B cell (primary cell): ENCODE measurements at regions of chr1 and their contacts with region 1.

Region 1: DNA sequence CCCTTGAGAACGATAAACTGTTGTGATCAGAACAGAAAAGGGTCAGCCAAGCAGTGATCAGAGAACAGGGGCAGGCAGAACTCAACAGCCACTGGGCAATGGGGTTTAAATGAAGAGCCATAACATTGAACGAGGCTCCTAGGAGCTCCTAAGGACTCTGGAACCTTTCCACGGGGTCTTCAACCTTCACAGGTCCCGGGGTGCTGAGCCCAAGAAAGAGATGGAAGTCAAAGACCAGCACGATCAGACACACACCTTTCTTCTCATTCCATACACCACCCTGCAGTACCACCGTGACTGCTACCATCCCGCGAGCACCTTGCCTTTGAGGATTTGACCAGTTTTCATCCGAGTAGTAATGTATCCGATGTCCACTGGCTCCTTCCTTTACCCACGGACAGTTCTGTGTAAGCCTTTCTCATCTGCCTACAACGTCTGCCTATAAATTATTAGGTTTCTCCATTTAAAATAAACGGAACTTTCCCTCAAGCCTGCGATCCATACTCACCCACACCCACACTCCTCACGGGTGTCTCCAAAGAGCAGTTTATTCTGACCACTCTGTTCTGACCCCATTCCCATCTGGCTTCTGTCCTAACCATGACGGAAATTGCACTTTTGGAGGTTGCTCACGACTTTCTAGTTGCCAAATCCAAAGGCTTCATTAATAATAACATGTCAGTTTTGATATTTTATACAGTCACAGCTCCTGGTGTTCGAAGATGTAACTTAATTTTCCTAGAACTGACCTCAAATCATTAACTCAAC is 16.8 kb upstream of the HHAT start:
- DNase-seq: no peak
- ATAC-seq: no peak
- H3K4me3 ChIP-seq: peak overlapping the region in 3 of 5 experiments; percentile 42 to 66 (median 55)
- H3K4me3 Mint-ChIP-seq: peak overlapping the region; percentile 85
- H3K27ac ChIP-seq: no peak overlapping the region
- H3K27ac Mint-ChIP-seq: no peak overlapping the region
- H3K4me1 ChIP-seq: peaks cover 3 to 13% of the 10 kb centered on the region in 2 donors
- H3K4me1 Mint-ChIP-seq: peaks cover 6% of the 10 kb centered on the region
- H3K27me3 ChIP-seq: peaks cover 0 to 2% (median 0%) of the 10 kb centered on the region in 4 experiments
- H3K27me3 Mint-ChIP-seq: peaks cover 17% of the 10 kb centered on the region
- CTCF ChIP-seq: no peak

Region 2: GRCh38 chr1:209860293-209860881 is 451.5 kb before region 1 on chr1:
- CTCF ChIA-PET with region 1: interaction called, 14 read pairs
- POLR2A ChIA-PET with region 1: interaction called, 8 read pairs
- intact Hi-C with region 1: no loop called
- DNase-seq: peak; percentile 75
- ATAC-seq: peak; percentile 81
- H3K4me3 ChIP-seq: no peak overlapping the region
- H3K4me3 Mint-ChIP-seq: no peak overlapping the region
- H3K27ac ChIP-seq: no peak overlapping the region
- H3K27ac Mint-ChIP-seq: no peak overlapping the region
- H3K4me1 ChIP-seq: no peaks in the 10 kb centered on the region
- H3K4me1 Mint-ChIP-seq: no peaks in the 10 kb centered on the region
- H3K27me3 ChIP-seq: peaks cover 0 to 11% (median 3%) of the 10 kb centered on the region in 4 experiments
- H3K27me3 Mint-ChIP-seq: peaks cover 29% of the 10 kb centered on the region
- CTCF ChIP-seq: peak; percentile 97

Region 3: DNA sequence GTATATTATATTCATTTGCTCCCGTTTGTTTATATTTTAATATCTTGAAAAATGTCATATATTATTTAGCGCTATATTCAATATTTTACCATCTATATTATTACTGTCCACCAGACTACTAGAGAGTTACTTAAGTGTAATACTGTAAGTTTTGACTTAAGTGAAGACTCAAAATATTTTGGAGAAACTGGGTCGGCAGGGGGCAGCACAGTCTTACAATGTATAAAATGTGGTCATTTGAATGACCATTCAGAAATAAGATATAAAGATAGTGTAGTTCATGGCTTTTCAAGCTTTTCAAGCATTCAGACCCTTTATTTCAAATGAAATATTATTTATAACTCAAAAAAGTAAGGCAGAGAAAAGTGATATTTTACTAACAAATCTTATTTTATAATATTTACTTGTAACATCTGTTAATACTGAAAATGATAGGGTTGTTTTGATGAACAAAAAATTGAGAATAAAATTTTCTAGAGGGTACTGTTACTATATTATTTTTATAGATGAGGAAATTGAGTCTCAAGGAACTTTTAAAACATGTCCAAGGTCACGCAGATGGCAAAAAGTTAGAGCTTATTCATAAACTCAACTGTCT is 168.3 kb before region 1 on chr1:
- CTCF ChIA-PET with region 1: interaction called, 20 read pairs
- POLR2A ChIA-PET with region 1: no interaction called
- intact Hi-C with region 1: loop called (anchors 1 kb)
- DNase-seq: peak; percentile 36
- ATAC-seq: no peak
- H3K4me3 ChIP-seq: no peak overlapping the region
- H3K4me3 Mint-ChIP-seq: no peak overlapping the region
- H3K27ac ChIP-seq: no peak overlapping the region
- H3K27ac Mint-ChIP-seq: no peak overlapping the region
- H3K4me1 ChIP-seq: no peaks in the 10 kb centered on the region
- H3K4me1 Mint-ChIP-seq: no peaks in the 10 kb centered on the region
- H3K27me3 ChIP-seq: peaks cover 0 to 8% (median 5%) of the 10 kb centered on the region in 4 experiments
- H3K27me3 Mint-ChIP-seq: peaks cover 18% of the 10 kb centered on the region
- CTCF ChIP-seq: peak; percentile 69

Region 4: DNA sequence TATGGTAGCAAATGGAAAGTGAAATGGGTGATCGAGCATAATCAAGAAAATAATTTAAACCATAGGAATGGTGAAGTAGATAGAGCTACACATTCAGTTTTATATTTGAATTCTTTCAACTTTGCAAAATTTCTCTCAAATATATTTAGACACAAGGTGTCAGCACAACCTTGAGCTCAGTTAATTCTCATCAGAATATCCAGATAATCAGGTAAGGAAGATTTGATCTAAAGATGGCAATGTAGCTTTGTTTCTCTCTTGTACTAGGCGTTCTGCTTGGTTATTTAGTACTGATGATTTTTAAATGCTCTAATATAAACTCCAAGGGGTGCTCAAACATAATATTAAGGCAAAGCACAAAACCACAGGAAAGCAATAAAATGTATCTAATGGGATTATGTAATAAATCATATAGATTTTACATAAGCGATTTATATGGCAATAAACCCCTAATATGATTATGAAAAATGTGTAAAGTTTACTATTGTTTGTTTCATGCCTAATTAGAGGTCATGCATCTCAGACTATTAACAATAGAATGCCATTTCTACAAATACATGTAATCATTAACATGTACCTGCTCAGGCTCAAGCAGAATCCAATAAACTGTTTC is 111.7 kb before region 1 on chr1:
- CTCF ChIA-PET with region 1: no interaction called
- POLR2A ChIA-PET with region 1: no interaction called
- intact Hi-C with region 1: loop called (anchors 5 kb)
- DNase-seq: no peak
- ATAC-seq: no peak
- H3K4me3 ChIP-seq: no peak overlapping the region
- H3K4me3 Mint-ChIP-seq: no peak overlapping the region
- H3K27ac ChIP-seq: no peak overlapping the region
- H3K27ac Mint-ChIP-seq: no peak overlapping the region
- H3K4me1 ChIP-seq: no peaks in the 10 kb centered on the region
- H3K4me1 Mint-ChIP-seq: no peaks in the 10 kb centered on the region
- H3K27me3 ChIP-seq: no peaks in the 10 kb centered on the region
- H3K27me3 Mint-ChIP-seq: peaks cover 4% of the 10 kb centered on the region
- CTCF ChIP-seq: no peak

Region 5: GRCh38 chr1:210292231-210292871 is 19.6 kb before region 1 on chr1:
- CTCF ChIA-PET with region 1: no interaction called
- POLR2A ChIA-PET with region 1: no interaction called
- intact Hi-C with region 1: no loop called
- DNase-seq: peak; percentile 31
- ATAC-seq: peak; percentile 54
- H3K4me3 ChIP-seq: peak overlapping the region in 3 of 5 experiments; percentile 25 to 46 (median 39)
- H3K4me3 Mint-ChIP-seq: peak overlapping the region; percentile 69
- H3K27ac ChIP-seq: no peak overlapping the region
- H3K27ac Mint-ChIP-seq: no peak overlapping the region
- H3K4me1 ChIP-seq: peaks cover 12 to 14% of the 10 kb centered on the region in 2 donors
- H3K4me1 Mint-ChIP-seq: peaks cover 3% of the 10 kb centered on the region
- H3K27me3 ChIP-seq: peaks cover 0 to 42% (median 23%) of the 10 kb centered on the region in 4 experiments
- H3K27me3 Mint-ChIP-seq: peaks cover 58% of the 10 kb centered on the region
- CTCF ChIP-seq: no peak

Region 6: GRCh38 chr1:210328746-210329503 is 17.0 kb after region 1 on chr1 and contains the start of gene HHAT:
- CTCF ChIA-PET with region 1: interaction called, 7 read pairs
- POLR2A ChIA-PET with region 1: interaction called, 3 read pairs
- intact Hi-C with region 1: loop called (anchors 1 kb)
- DNase-seq: peak; percentile 75
- ATAC-seq: peak; percentile 70
- H3K4me3 ChIP-seq: peak within 1 kb of the TSS; percentile 52 to 89 (median 87)
- H3K4me3 Mint-ChIP-seq: peak within 1 kb of the TSS; percentile 94
- H3K27ac ChIP-seq: peak within 1 kb of the TSS; percentile 54 to 64
- H3K27ac Mint-ChIP-seq: peak within 1 kb of the TSS; percentile 90
- H3K4me1 ChIP-seq: peaks cover 16 to 25% of the 10 kb centered on the region in 2 donors
- H3K4me1 Mint-ChIP-seq: peaks cover 39% of the 10 kb centered on the region
- H3K27me3 ChIP-seq: peaks cover 0 to 2% (median 0%) of the 10 kb centered on the region in 4 experiments
- H3K27me3 Mint-ChIP-seq: peaks cover 12% of the 10 kb centered on the region
- CTCF ChIP-seq: no peak
- total RNA-seq, gene HHAT: 26.7 and 28.2 TPM in 2 replicates

Region 7: DNA sequence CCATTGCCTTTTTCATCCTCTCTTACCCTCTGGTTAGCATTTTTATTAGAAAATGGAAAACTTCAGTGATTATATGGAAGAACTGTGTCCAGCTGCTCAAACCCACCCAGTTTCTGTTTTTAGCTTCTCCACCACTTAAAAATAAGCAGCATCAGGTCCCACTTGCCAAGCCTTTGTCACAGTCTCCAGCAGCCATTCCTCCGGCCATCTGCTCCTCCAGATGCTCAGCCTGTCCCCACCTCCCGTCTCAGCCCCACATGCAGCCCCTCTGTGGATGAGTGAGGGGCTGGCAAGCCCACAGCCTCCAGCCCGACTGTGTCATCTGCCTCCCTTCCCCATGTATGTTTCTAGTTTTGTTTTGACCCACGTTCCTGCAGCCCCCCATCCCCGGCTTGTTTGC is 306.5 kb after region 1 on chr1:
- CTCF ChIA-PET with region 1: no interaction called
- POLR2A ChIA-PET with region 1: no interaction called
- intact Hi-C with region 1: no loop called
- DNase-seq: no peak
- ATAC-seq: no peak
- H3K4me3 ChIP-seq: no peak overlapping the region
- H3K4me3 Mint-ChIP-seq: no peak overlapping the region
- H3K27ac ChIP-seq: no peak overlapping the region
- H3K27ac Mint-ChIP-seq: no peak overlapping the region
- H3K4me1 ChIP-seq: no peaks in the 10 kb centered on the region
- H3K4me1 Mint-ChIP-seq: no peaks in the 10 kb centered on the region
- H3K27me3 ChIP-seq: no peaks in the 10 kb centered on the region
- H3K27me3 Mint-ChIP-seq: peaks cover under 1% of the 10 kb centered on the region
- CTCF ChIP-seq: no peak